Heart left ventricle (tissue), 16 donors: ENCODE measurements at regions of chr15 and their contacts with region 1.

Region 1: DNA sequence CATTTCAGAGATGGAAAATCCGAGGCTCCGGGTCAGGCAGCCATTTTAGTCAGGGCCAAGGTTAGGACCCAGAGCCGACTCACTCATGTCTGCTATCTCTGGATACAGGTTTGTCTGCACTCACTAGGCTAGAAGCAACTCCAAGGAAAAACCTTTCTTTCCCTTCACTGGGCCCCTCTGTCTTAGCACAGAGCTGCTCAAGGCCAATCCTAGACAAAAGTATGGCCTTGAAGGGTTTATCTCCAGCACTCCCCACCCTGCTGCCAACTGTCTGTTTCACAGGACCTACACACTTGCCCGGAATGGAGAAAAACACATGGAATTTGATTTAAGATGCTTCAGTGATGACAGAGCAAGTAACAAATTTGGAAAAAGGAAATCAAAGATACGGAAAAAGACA is 25.6 kb downstream of the ACAN start:
- DNase-seq: no peak
- ATAC-seq: no peak
- H3K4me3 ChIP-seq: no peak overlapping the region
- H3K27ac ChIP-seq: no peak overlapping the region
- H3K4me1 ChIP-seq: peaks cover 0 to 6% (median 0%) of the 10 kb centered on the region in 12 donors
- H3K27me3 ChIP-seq: peaks cover 0 to 3% (median 0%) of the 10 kb centered on the region in 9 donors
- CTCF ChIP-seq: no peak
- POLR2A ChIP-seq: no peak

Region 2: GRCh38 chr15:86849558-86850285 is 1979.1 kb before region 1 on chr15:
- intact Hi-C with region 1: no loop called
- DNase-seq: peak in 4 of 5 donors; percentile 46 to 74 (median 50)
- ATAC-seq: peak; percentile 96 to 99 (median 98)
- H3K4me3 ChIP-seq: no peak overlapping the region
- H3K27ac ChIP-seq: peak overlapping the region in 9 of 12 donors; percentile 14 to 72 (median 55)
- H3K4me1 ChIP-seq: peaks cover 0 to 24% (median 2%) of the 10 kb centered on the region in 12 donors
- H3K27me3 ChIP-seq: no peaks in the 10 kb centered on the region
- CTCF ChIP-seq: no peak
- POLR2A ChIP-seq: no peak

Region 3: DNA sequence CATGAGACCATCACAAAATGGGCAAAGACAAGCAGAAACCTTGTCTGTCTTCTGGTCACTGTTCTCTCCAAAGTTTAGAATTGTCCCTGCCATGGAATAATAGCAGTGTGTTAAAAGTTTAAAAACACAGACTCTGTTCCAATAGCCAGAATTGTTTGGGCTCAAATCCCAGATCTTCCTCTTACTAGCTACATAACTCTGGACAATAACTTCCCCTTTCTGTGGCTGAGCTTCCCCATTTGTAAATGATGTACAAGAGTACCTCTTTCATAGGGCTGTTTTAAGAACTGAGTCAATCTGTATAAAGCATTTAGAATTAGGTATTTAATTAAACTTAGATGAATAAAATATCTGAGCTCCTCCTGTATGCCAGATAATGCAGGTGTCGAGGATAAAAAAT is 1195.3 kb before region 1 on chr15:
- intact Hi-C with region 1: loop called in 1 of 10 experiments (anchors 10 kb)
- DNase-seq: no peak
- ATAC-seq: no peak
- H3K4me3 ChIP-seq: no peak overlapping the region
- H3K27ac ChIP-seq: no peak overlapping the region
- H3K4me1 ChIP-seq: peaks cover 0 to 6% (median 0%) of the 10 kb centered on the region in 12 donors
- H3K27me3 ChIP-seq: no peaks in the 10 kb centered on the region
- CTCF ChIP-seq: no peak
- POLR2A ChIP-seq: no peak

Region 4: DNA sequence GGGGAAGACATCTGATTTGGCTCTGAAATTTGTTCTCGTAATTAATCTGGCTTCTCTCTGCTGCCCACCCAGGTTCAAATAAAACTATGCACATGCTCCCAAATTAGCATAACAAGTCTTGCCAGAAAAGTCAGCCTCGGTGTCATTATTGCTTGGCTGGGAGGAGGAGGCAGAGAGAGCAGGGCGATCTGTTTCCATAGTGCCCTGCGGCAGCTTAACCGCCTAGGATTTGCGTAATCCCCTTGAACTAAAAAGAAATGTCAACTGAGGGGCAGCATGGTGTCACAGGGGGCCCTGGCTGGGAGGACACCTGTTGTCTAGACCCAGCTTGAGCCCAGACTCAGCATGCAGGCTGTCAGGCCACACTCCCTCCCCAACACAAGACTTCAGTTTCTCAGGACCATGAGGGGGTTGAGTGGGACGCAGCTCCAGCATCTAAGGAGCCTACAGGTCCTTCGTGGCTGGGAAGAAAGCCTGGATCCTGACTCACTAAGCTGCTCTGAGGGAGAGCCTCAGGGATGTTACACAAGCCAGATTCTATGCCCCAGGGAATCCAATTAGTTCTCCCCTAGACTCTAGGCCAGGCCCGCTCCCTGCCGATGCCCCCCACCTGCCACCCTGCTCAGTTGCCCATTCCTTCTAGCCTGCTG is 344.0 kb before region 1 on chr15:
- intact Hi-C with region 1: loop called in 2 of 10 experiments (anchors 10 kb)
- DNase-seq: no peak
- ATAC-seq: peak in 2 of 4 donors; percentile 6 to 21
- H3K4me3 ChIP-seq: no peak overlapping the region
- H3K27ac ChIP-seq: no peak overlapping the region
- H3K4me1 ChIP-seq: peaks cover 0 to 6% (median 0%) of the 10 kb centered on the region in 12 donors
- H3K27me3 ChIP-seq: no peaks in the 10 kb centered on the region
- CTCF ChIP-seq: no peak
- POLR2A ChIP-seq: no peak

Region 5: DNA sequence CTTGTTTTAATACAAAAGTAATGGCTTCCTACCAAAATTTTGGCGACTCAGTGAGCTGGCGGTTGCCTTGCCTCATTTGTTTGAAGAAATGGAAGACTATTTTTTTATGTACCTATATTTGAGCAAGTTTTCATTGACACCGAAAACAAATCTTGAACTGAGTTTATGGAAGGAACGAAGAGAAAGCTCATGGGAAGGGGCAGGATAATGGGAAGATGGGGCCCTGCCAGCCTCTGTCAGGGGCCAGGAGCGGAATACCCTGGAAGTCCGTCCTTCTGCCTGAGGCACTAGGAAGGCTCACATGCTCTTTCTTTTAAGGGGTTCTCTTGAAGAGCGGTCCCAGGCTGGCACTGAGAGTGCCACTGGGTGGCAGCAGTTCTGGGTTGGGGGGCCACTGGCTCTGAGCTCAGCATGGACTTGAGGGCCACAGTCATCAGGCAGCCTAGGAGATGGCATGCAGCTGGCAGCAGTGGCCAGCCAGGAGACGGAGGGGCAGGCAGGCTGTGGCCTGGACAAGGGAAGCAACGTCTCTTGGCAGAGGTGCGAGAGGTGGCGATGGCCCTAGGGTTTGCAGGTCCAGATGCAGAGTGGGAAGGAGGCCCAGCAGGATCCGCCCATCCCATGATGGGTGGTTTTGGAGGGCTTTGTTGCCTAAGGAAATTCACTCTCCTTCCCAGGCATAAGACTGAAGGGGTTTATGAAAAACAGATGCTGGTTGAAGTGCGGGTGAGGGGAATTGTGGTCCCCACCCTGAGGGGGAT is 148.4 kb before region 1 on chr15:
- intact Hi-C with region 1: no loop called
- DNase-seq: no peak
- ATAC-seq: no peak
- H3K4me3 ChIP-seq: no peak overlapping the region
- H3K27ac ChIP-seq: no peak overlapping the region
- H3K4me1 ChIP-seq: no peaks in the 10 kb centered on the region
- H3K27me3 ChIP-seq: no peaks in the 10 kb centered on the region
- CTCF ChIP-seq: no peak
- POLR2A ChIP-seq: no peak